ENCODE measurements at regions of chr2 and their contacts with region 1.

Region 1: DNA sequence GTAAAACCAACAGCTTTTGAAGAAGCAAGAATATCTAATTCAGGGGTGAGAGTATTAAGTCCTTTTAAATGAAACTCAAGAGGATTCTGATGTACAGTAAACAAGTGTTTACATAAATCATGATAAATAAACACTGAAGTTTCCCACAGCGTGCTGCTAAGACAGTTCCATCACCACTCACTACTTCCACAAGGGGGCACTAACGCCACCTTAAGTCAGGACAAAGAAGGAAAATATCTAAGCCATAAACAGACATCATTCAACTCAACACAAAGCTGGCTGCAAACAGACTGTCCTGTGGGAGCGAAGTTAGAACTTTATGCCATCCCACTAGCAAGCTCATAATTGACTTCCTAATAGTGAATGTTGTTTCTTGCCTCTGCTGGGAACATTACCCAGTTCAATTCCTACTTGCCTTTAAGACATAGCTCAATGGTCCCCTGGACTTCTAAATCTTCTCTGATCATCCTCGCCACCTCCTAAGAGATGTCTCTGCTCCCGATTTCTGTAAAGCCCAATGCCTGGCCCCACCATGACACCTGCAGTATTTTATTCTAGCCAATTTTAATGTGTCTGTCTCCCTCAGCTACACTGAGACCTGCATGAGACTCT is 36.5 kb downstream of the MRPL44 start:
- DNase-seq: peak in 1 of 2 experiments; percentile 68
- H3K4me3 ChIP-seq: no peak overlapping the region
- H3K27ac ChIP-seq: no peak overlapping the region
- H3K4me1 ChIP-seq: peaks cover 0 to 4% (median 0%) of the 10 kb centered on the region in 4 experiments; a peak in 1 of 7 replicates
- H3K27me3 ChIP-seq: no peaks in the 10 kb centered on the region
- CTCF ChIP-seq: peak; percentile 43 to 87 (median 77)
- EP300 ChIP-seq: no peak
- POLR2A ChIP-seq: no peak
- RAD21 ChIP-seq: peak; percentile 88 to 92

Region 2: GRCh38 chr2:223846525-223846924 is 147.2 kb before region 1 on chr2:
- CTCF ChIA-PET with region 1: no interaction called
- POLR2A ChIA-PET with region 1: no interaction called
- DNase-seq: no peak
- H3K4me3 ChIP-seq: no peak overlapping the region
- H3K27ac ChIP-seq: no peak overlapping the region
- H3K4me1 ChIP-seq: no peaks in the 10 kb centered on the region
- H3K27me3 ChIP-seq: no peaks in the 10 kb centered on the region
- CTCF ChIP-seq: no peak
- EP300 ChIP-seq: no peak
- POLR2A ChIP-seq: no peak
- RAD21 ChIP-seq: no peak

Region 3: DNA sequence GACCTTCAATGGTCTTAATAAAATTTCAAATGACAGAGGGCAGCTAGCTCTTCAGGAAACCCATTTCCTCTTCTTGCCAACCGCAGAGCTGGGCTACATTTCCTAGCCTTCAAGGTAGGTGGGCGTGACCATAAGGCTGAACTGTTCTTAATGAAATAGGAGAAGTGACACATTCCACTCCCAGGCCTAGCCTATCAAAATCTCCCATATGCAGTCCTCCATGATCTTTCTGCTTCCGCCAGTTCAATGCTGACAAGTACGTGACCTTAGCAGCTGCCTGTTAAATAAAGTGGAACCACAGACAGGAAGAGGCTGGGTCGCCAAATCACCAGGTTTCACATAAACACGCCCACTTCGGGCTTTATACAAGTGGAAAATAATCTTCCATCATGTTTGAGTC is 32.1 kb after region 1 on chr2:
- CTCF ChIA-PET with region 1: interaction called, 14 read pairs
- POLR2A ChIA-PET with region 1: no interaction called
- DNase-seq: no peak
- H3K4me3 ChIP-seq: no peak overlapping the region
- H3K27ac ChIP-seq: no peak overlapping the region
- H3K4me1 ChIP-seq: peaks cover 5 to 25% (median 18%) of the 10 kb centered on the region in 4 experiments
- H3K27me3 ChIP-seq: peaks cover 0 to 5% (median 2%) of the 10 kb centered on the region in 4 experiments; a peak in 2 of 7 replicates
- CTCF ChIP-seq: no peak
- EP300 ChIP-seq: no peak
- POLR2A ChIP-seq: no peak
- RAD21 ChIP-seq: no peak

Region 4: DNA sequence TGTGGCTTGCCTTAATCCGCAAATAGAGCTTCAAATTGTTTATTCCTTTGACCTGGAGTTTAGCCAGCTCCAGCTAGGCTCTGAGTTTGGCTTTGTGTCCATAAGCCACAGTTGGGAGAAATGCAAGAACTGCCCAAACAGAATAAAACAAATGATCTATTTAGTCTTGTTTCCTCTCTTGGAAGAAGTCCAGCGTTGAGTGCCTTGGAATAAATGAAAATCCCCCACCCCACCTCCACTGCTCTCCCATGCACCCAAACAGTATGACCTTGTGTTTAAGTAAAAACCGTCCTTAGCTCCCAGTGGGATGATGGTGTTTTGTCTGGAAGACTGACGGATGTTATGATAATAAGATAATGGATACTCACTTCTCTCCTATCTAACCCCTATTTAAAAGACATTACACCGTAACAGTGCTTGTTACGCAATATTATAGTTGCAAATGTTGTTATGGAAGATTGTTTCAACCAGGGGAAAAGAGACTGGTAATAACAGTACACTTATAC is 48.5 kb after region 1 on chr2:
- CTCF ChIA-PET with region 1: interaction called, 29 read pairs
- POLR2A ChIA-PET with region 1: no interaction called
- DNase-seq: no peak
- H3K4me3 ChIP-seq: no peak overlapping the region
- H3K27ac ChIP-seq: no peak overlapping the region
- H3K4me1 ChIP-seq: peaks cover 0 to 3% (median 1%) of the 10 kb centered on the region in 4 experiments; a peak in 3 of 7 replicates
- H3K27me3 ChIP-seq: peaks cover 0 to 14% (median 8%) of the 10 kb centered on the region in 4 experiments; a peak in 5 of 7 replicates
- CTCF ChIP-seq: no peak
- EP300 ChIP-seq: no peak
- POLR2A ChIP-seq: no peak
- RAD21 ChIP-seq: no peak

Region 5: GRCh38 chr2:224077773-224078507 is 84.2 kb after region 1 on chr2:
- CTCF ChIA-PET with region 1: interaction called, 13 read pairs
- POLR2A ChIA-PET with region 1: no interaction called
- DNase-seq: no peak
- H3K4me3 ChIP-seq: no peak overlapping the region
- H3K27ac ChIP-seq: no peak overlapping the region
- H3K4me1 ChIP-seq: no peaks in the 10 kb centered on the region
- H3K27me3 ChIP-seq: no peaks in the 10 kb centered on the region
- CTCF ChIP-seq: no peak
- EP300 ChIP-seq: no peak
- POLR2A ChIP-seq: no peak
- RAD21 ChIP-seq: no peak

Region 6: DNA sequence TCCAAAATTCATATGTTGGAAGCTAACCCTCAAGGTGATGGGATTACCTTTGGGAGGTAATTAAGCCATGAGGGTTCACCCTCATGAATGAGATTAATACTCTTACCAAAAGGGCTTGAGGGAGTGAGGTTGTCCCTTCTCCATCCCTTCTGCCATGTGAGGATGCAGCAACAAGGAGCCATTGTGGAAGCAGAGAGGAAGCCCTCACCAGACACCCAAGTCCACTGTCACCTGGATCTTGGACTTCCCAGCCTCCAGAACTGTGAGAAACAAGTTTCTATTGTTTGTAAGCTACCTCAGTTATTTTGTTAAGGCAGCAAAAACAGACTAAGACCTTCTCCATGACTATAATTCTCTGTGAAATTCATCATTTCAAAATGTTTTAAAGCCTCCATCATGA is 282.5 kb after region 1 on chr2:
- CTCF ChIA-PET with region 1: interaction called, 436 read pairs
- POLR2A ChIA-PET with region 1: no interaction called
- DNase-seq: no peak
- H3K4me3 ChIP-seq: no peak overlapping the region
- H3K27ac ChIP-seq: no peak overlapping the region
- H3K4me1 ChIP-seq: no peaks in the 10 kb centered on the region
- H3K27me3 ChIP-seq: no peaks in the 10 kb centered on the region
- CTCF ChIP-seq: no peak
- EP300 ChIP-seq: no peak
- POLR2A ChIP-seq: no peak
- RAD21 ChIP-seq: no peak

Measured in H1 (cell line).